Activated naive CD4-positive, alpha-beta T cell treated with anti-CD3 and anti-CD28 coated beads for 36 hours (primary cell): ENCODE measurements at regions of chr3 and their contacts with region 1.

Region 1: GRCh38 chr3:191901741-191902140 is 440.8 kb downstream of the PYDC2 start:
- DNase-seq: no peak
- H3K4me3 Mint-ChIP-seq: no peak overlapping the region
- H3K27ac Mint-ChIP-seq: no peak overlapping the region
- H3K4me1 Mint-ChIP-seq: no peaks in the 10 kb centered on the region
- H3K27me3 Mint-ChIP-seq: no peaks in the 10 kb centered on the region

Region 2: DNA sequence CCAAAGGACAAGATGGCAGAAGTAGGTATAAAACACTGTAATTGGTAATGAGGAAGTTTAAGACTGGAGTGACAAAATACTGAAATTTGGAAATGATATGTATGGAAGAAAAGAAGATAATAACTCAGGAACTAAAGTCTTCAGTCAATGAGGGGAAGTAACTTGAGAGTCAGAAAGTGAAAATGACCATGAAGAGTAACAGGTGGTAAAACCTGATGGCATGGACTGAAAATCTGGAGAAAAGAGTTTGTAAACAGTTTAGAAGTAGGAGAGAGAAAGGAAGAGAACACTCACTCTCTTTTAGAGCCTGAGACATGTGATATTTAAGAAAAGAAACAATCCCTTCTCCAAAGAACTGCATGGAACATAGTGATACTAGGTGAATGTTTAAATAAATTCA is 52.9 kb before region 1 on chr3:
- CTCF ChIA-PET with region 1: no interaction called
- intact Hi-C with region 1: loop called (anchors 10 kb)
- DNase-seq: no peak
- H3K4me3 Mint-ChIP-seq: no peak overlapping the region
- H3K27ac Mint-ChIP-seq: no peak overlapping the region
- H3K4me1 Mint-ChIP-seq: no peaks in the 10 kb centered on the region
- H3K27me3 Mint-ChIP-seq: no peaks in the 10 kb centered on the region